ENCODE measurements at regions of chr18 and their contacts with region 1.

Region 1: DNA sequence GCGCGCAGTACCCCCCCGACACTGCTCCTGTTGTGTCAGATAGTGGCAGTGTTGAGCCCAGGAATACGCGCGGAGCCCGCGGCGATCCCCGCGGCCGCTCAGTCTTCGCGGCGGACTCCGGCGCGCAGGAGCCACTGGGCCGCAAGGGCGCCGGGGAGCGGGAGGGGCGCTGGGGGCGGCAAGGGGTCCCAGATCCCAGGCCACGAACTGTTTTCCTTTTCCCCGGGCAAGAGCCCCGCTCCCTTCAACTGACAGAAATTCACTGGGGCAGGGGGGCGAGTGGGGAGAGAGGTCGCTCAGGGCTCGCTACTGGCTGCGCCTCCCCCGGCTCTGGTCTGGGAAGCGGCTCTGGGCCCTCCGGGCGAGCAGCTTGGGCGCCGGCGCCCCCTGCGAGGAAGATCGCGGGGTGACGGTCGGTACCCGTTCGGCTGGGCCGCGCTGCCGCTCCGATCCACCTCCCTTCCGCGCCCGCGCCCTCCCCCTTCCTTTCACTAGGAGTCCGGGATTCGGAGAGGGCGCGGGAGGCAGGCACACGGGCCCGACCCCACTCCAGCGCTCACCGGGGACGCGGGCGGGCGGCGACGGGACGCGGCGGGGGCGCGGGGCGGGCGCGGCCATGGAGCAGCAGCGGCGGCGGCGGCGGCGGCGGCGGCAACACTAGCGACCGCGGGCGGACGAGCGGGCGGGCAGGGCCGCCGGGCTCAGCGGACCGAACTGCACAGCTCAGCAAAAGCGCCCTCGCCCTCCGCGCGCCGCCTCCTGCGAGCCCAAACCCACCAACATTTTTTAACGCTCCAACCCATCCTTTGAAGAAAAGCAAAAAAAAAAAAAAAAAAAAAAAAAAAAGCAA is 1.4 kb upstream of the SETBP1 start:
- DNase-seq: peak; percentile 89
- ATAC-seq: peak; percentile 92
- H3K4me3 Mint-ChIP-seq: no peak overlapping the region
- H3K27ac Mint-ChIP-seq: peak overlapping the region; percentile 54
- H3K4me1 Mint-ChIP-seq: peaks cover 18% of the 10 kb centered on the region
- H3K27me3 Mint-ChIP-seq: peaks cover 9% of the 10 kb centered on the region

Region 2: GRCh38 chr18:44458777-44459176 is 220.5 kb before region 1 on chr18:
- CTCF ChIA-PET with region 1: no interaction called
- DNase-seq: no peak
- ATAC-seq: no peak
- H3K4me3 Mint-ChIP-seq: no peak overlapping the region
- H3K27ac Mint-ChIP-seq: no peak overlapping the region
- H3K4me1 Mint-ChIP-seq: no peaks in the 10 kb centered on the region
- H3K27me3 Mint-ChIP-seq: peaks cover 17% of the 10 kb centered on the region

Region 3: GRCh38 chr18:44564922-44565321 is 114.4 kb before region 1 on chr18:
- CTCF ChIA-PET with region 1: no interaction called
- DNase-seq: no peak
- ATAC-seq: no peak
- H3K4me3 Mint-ChIP-seq: no peak overlapping the region
- H3K27ac Mint-ChIP-seq: no peak overlapping the region
- H3K4me1 Mint-ChIP-seq: no peaks in the 10 kb centered on the region
- H3K27me3 Mint-ChIP-seq: peaks cover 8% of the 10 kb centered on the region

Region 4: DNA sequence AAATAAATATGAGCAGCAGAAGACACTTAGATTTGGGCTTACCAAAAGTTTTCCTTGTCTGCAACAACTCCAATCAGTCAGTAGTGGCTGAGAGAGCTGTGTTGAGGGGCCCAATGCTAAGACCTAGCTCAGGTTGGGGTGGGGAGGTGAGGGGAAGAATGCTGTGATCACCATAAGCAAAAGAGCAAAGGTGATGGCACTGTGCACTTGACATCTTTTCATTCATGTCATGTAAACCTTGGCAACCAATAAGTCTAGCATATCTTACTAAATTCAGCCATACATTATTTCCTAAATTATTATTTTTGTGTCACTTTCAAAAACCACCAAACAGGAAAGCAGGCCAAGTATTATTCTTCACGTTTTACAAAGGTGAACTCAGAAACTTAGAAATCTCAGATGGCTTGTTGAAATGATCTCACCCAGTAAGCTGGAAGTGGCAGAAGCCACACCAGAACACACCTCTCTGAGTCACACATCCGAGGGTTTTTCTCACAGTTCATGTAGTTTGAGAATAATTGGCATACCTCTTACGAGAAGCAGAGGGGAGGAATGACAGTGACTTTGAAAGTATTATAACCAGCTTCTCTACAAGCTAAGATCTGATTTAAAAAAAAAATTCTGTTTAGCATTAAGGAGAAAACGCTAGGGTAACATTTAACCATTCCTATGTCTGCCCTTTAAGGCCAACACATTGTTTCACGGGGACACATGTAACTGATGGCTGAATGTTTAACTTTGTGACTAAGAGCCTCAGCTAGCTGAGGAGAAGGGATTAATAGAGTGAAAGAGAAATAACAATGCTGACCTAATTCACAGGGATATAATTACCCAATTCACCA is 41.9 kb before region 1 on chr18:
- CTCF ChIA-PET with region 1: no interaction called
- DNase-seq: peak; percentile 55
- ATAC-seq: peak; percentile 89
- H3K4me3 Mint-ChIP-seq: no peak overlapping the region
- H3K27ac Mint-ChIP-seq: peak overlapping the region; percentile 61
- H3K4me1 Mint-ChIP-seq: peaks cover 22% of the 10 kb centered on the region
- H3K27me3 Mint-ChIP-seq: peaks cover 16% of the 10 kb centered on the region

Region 5: DNA sequence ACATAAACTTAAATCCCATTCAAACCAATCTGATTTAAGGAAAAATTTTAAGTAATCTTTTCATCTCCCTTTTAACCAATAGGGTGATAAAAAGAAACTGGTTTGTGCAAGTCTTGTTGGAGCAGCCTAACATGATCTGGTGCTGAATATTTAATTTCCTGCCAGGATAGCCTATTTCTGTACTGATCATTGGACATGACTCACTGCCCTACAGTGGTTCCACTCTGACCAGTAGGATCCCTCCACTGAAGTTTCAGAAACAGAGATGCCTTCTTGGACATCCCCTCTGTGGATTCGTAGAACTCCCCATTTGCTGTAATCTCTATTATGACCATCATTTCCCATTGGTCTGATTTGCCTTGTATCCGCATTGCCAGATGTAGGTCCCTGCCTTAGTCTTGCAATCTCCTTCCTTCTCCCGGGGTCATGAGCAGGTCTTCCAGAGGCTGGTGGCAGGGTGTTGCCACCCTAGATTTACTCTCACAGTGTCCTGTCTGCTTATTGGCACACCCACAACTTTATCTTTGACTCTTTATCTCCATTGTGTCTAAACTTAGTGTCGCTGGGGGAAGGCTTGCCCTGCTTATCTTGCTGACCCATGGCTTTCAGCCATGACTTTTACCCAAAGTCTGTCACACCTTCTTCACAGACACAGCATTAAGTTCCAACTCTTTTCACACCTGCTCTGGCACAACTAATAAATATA is 10.9 kb before region 1 on chr18:
- CTCF ChIA-PET with region 1: no interaction called
- DNase-seq: no peak
- ATAC-seq: no peak
- H3K4me3 Mint-ChIP-seq: no peak overlapping the region
- H3K27ac Mint-ChIP-seq: no peak overlapping the region
- H3K4me1 Mint-ChIP-seq: no peaks in the 10 kb centered on the region
- H3K27me3 Mint-ChIP-seq: peaks cover 38% of the 10 kb centered on the region

Region 6: GRCh38 chr18:44729631-44730101 is 50.4 kb after region 1 on chr18:
- CTCF ChIA-PET with region 1: interaction called, 12 read pairs
- DNase-seq: peak; percentile 88
- ATAC-seq: peak; percentile 72
- H3K4me3 Mint-ChIP-seq: peak overlapping the region; percentile 1
- H3K27ac Mint-ChIP-seq: peak overlapping the region; percentile 83
- H3K4me1 Mint-ChIP-seq: peaks cover 99% of the 10 kb centered on the region
- H3K27me3 Mint-ChIP-seq: peaks cover 3% of the 10 kb centered on the region